ENCODE measurements at regions of chr14 and their contacts with region 1.

Region 1: DNA sequence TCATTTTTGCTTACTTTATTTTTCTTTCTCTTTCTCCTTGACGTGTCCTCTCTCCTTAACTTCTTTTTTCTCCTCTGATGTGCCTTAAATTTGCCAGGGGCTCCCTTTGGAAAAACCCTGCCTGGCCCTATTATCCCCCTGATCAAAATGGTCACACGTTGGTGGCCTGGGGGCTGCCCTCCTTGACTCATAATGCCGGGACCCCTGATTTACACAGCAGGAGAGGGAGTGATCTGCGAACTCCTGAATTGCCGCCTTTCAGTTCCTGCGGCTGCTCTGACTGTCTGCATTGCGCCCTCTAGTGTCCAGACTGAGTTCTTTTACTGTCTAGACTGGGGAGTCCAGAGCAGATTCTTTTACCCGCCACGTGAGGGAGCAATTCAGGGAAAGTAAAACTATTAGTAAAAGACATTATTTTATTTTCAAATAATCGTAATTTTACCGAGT is 44.8 kb upstream of the GZMB start:
- DNase-seq: peak; percentile 82
- ATAC-seq: peak; percentile 99
- H3K4me3 ChIP-seq: no peak overlapping the region
- H3K27ac ChIP-seq: no peak overlapping the region
- H3K4me1 ChIP-seq: 0 out of 4 replicates have a peak, but pooled peaks cover 0 to 2% of the 10 kb centered on the region in 2 experiments
- H3K27me3 ChIP-seq: no peaks in the 10 kb centered on the region
- CTCF ChIP-seq: peak; percentile 96 to 99 (median 97)
- POLR2A ChIP-seq: no peak
- RAD21 ChIP-seq: peak; percentile 60

Region 2: DNA sequence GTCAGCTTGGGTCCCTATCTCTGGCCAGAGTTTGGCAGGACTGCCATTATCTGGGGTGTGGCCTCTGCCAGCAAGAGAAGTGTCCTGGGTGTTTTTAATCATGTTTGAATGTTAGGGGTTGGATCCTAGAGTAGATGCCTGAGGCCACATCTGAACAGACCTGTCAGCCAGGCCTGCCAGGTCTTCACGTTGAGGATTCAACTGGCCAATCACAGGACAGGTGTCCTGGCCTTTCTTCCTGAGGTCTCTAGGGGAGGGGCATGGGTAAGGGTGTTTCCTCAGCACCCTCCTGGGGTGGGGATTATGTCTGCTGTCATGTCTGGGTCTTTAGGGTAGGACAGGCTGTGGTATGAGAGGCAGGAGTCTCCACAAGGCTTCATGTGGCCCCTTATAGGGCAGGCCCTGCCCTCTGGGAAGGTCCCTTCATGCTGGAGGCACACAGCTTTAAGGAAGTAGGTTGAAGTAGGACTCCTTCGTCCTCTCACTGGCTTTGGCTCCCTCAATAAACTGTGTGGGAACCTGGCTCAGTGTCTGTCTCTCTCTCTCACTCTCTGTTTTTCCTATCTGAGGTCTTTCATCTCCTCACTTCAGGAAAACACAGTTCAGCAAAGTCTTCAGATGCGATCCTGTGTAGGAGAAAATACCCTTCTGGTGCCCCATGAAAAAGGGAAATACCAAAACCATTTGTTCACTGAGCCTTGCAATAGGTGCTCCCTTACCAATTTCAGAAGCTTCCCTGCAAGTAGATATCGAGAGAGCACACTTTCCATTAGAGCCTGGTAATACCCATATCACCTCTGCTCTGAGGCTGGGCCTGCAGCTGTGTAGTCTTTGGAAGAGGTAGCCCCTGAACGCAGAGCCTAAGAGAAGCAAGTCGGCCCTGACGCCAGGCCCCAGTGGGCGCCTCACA is 555.1 kb before region 1 on chr14:
- CTCF ChIA-PET with region 1: no interaction called
- POLR2A ChIA-PET with region 1: no interaction called
- RAD21 ChIA-PET with region 1: no interaction called
- intact Hi-C with region 1: no loop called
- DNase-seq: no peak
- ATAC-seq: no peak
- H3K4me3 ChIP-seq: no peak overlapping the region
- H3K27ac ChIP-seq: no peak overlapping the region
- H3K4me1 ChIP-seq: no peaks in the 10 kb centered on the region
- H3K27me3 ChIP-seq: no peaks in the 10 kb centered on the region
- CTCF ChIP-seq: no peak
- POLR2A ChIP-seq: no peak
- RAD21 ChIP-seq: no peak

Region 3: DNA sequence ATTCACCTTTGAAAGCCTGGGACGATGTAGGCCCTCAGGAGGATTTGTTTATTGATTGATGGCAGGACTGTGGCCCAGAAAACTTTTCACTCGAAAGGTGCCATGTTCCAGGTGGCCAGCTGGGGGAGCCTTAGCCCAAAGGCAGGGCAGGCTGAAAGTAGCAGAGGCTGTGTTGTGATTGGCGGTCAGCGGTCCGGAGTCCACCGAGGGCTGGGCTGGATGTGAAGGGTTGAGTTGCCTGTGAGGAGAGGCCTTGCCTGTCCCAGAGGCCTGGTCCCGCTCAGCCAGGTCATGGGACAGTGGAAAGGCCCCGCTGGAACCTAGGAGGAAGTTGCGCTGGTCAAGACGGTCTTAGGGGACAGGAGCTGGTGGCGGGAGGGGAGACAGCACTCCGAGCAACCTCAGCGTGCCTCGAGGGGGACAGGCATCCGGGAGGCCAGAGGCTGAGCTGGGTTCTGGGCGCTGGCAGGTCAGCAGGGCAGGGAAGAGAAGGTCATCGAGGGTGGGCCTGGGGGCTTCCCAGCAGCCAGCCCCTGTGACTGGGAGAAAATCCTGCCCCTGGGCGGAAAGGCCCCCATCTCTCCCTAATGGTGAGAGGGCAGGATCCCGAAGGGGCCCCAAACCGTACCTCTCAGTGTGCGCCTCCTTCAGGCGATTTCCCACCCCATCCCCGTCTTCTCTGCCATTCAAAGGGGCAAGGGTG is 197.1 kb before region 1 on chr14:
- CTCF ChIA-PET with region 1: interaction called, 3 read pairs
- POLR2A ChIA-PET with region 1: no interaction called
- RAD21 ChIA-PET with region 1: no interaction called
- intact Hi-C with region 1: loop called (anchors 2 kb)
- DNase-seq: peak; percentile 44
- ATAC-seq: peak; percentile 98
- H3K4me3 ChIP-seq: no peak overlapping the region
- H3K27ac ChIP-seq: no peak overlapping the region
- H3K4me1 ChIP-seq: peaks cover 2 to 23% of the 10 kb centered on the region in 2 experiments; a peak in 3 of 4 replicates
- H3K27me3 ChIP-seq: no peaks in the 10 kb centered on the region
- CTCF ChIP-seq: peak; percentile 70 to 88 (median 80); a peak in 5 of 6 replicates
- POLR2A ChIP-seq: no peak
- RAD21 ChIP-seq: peak; percentile 69